Thyroid gland (tissue), 4 donors: ENCODE measurements at regions of chr10 and their contacts with region 1.

Region 1: DNA sequence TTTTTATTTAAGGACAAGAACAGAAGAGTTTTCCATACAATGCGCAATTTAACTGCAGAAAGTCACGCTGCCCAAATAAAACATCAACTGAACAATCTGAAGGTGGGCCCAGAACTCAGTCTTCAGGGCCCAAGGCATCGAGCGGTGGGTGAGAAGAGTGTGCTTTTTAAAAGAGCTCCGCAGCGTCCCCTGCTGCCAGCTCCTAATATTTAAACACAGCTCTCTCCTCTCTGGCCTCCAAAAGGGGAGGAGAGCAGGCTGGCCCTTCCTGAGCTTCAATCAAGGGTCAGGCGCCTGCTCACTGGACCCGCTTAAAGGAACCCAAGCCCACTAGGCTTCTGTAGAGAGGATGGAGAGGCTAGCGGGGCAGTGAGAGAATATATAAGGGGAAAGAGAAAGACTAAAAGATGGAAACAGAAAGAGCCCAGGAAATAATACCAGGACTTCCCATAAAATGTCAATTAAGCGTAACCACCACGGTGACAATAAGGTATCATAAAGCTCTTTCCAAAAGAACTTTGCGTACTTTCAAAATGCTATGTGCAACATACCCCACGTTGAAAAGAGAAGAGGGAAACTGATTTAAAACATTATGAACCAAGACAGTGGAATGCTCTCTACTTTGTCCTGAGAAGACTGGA is 2.8 kb downstream of the FAM53B start:
- DNase-seq: peak; percentile 87 to 91
- H3K4me3 ChIP-seq: peak overlapping the region in 1 of 3 donors; percentile 45
- H3K27ac ChIP-seq: peak overlapping the region; percentile 89 to 98 (median 93)
- H3K4me1 ChIP-seq: peaks cover 66 to 75% of the 10 kb centered on the region in 2 donors
- H3K27me3 ChIP-seq: no peaks in the 10 kb centered on the region
- CTCF ChIP-seq: peak; percentile 65 to 98 (median 90)
- POLR2A ChIP-seq: peak in 1 of 2 donors; percentile 39

Region 2: DNA sequence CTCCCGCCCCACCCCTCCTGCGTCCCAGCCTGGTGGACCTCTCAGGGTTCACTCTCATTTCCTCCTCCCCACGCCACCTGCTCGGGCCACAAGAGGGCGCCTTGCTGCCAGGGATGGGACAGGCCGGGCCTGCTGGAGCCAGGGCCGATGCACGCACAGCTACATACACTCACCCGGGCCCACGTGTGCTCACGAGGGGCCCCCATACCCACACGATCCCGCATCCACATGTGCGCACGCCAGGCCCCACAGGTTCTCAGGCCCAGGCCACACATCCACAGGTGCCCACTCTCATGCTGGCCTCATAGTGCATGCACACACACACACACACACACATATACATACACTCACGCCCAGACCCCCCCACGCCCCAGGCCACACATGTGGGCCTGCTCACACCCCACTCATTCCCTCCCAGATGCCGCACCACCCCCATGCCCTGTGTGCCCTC is 211.2 kb before region 1 on chr10:
- intact Hi-C with region 1: loop called (anchors 5 kb)
- DNase-seq: peak; percentile 86 to 89
- H3K4me3 ChIP-seq: no peak overlapping the region
- H3K27ac ChIP-seq: no peak overlapping the region
- H3K4me1 ChIP-seq: peaks cover 0 to 8% of the 10 kb centered on the region in 2 donors
- H3K27me3 ChIP-seq: no peaks in the 10 kb centered on the region
- CTCF ChIP-seq: peak; percentile 61 to 94 (median 86)
- POLR2A ChIP-seq: no peak

Region 3: DNA sequence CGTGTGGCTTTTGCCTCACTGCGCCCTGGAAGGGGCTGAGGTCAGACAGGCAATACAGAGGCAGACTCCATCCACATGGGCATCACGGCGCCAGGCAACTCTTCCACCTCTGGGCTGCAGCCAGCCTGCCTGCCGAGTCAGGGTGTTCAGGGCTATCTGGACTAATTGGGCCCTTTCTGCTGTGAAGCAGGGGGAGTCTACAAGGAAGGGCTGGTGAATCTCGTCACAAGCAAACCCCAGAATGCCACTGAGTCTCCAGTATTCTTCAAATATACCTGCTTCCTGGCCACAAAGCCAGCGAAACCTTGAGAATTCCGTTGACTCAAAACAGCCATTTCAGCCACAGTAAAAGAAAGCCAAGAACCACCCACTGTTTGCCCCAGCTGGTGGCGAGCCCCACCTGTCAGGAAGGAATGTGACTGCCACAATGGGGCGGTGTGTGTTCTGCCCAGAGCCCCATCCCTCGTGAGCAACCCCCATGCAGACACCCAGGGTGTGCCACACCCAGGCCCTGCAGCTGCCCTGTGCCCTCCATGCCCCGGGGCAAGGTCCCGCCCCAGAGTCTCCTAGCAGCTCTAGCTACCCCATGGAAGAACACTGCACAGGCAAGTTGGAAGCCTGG is 114.5 kb before region 1 on chr10:
- intact Hi-C with region 1: loop called (anchors 5 kb)
- DNase-seq: peak in 1 of 2 donors; percentile 42
- H3K4me3 ChIP-seq: no peak overlapping the region
- H3K27ac ChIP-seq: peak overlapping the region; percentile 67 to 98 (median 88)
- H3K4me1 ChIP-seq: peaks cover 94 to 100% of the 10 kb centered on the region in 2 donors
- H3K27me3 ChIP-seq: no peaks in the 10 kb centered on the region
- CTCF ChIP-seq: no peak
- POLR2A ChIP-seq: no peak

Region 4: GRCh38 chr10:124697830-124698544 is 43.4 kb before region 1 on chr10:
- intact Hi-C with region 1: loop called (anchors 5 kb)
- DNase-seq: peak; percentile 70 to 78
- H3K4me3 ChIP-seq: no peak overlapping the region
- H3K27ac ChIP-seq: peak overlapping the region; percentile 75 to 92 (median 91)
- H3K4me1 ChIP-seq: peaks cover 66 to 97% of the 10 kb centered on the region in 2 donors
- H3K27me3 ChIP-seq: no peaks in the 10 kb centered on the region
- CTCF ChIP-seq: no peak
- POLR2A ChIP-seq: no peak